ENCODE measurements at regions of chrX and their contacts with region 1.

Region 1: GRCh38 chrX:112642349-112642748 is 37.4 kb downstream of the LHFPL1 start:
- H3K4me3 ChIP-seq: no peak overlapping the region
- H3K27ac ChIP-seq: no peak overlapping the region
- H3K4me1 ChIP-seq: no peaks in the 10 kb centered on the region
- CTCF ChIP-seq: peak; percentile 59

Region 2: DNA sequence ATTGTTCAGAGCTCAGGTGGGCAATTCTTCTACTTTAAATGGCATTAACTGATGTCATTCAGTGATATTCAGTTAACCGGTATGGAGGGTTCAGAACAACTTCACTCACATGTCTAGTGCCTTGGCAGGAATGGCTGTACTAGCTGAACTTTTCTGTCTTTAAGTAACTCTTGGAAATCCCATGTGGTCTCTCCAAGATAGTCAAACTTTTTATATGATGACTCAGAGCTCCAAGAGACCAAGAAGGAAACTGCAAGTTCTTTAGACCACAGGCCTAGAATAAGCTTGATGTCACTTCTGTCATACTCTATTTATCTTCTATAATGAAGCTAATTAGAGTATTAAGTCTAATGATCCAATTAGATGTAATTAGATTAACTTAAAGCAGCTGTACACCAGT is 12.5 kb after region 1 on chrX:
- CTCF ChIA-PET with region 1: interaction called, 11 read pairs
- POLR2A ChIA-PET with region 1: no interaction called
- H3K4me3 ChIP-seq: no peak overlapping the region
- H3K27ac ChIP-seq: no peak overlapping the region
- H3K4me1 ChIP-seq: no peaks in the 10 kb centered on the region
- CTCF ChIP-seq: no peak

Region 3: DNA sequence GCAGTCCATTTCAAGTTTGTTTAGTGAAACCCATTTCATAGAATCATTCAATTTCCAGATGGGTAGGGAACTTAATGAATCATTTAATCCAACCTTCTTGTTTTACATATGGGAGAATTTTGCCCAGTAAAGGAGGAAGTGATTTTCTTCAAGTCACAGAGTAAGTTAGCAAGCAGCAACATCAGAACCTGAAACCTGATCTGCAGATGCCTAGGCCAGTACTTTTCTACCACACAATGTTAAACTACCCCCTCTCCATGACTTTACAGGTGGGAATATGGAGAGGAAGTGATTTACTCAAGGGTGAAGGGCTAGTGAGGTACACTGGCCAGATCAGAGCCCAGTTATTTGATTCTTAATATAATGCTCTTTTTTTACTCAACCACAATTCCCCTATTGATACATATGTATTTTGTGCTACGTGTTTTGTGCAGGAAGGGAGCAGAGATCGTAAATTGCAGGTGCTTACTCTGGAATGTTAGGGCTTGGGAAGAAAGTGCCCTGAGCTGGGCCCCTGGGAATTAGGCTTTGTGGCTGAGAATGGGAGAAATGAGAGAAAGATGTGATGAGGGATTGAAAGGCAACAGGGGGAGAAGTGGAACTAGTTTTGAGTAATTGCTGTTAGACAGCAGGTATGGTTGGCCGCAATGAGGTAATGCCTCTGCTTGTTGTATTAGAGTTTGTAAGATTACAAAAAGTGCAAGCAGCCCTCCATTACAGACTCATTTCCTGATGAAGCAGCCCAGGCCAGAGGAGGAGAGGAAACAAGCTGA is 30.6 kb after region 1 on chrX:
- CTCF ChIA-PET with region 1: no interaction called
- POLR2A ChIA-PET with region 1: no interaction called
- H3K4me3 ChIP-seq: no peak overlapping the region
- H3K27ac ChIP-seq: no peak overlapping the region
- H3K4me1 ChIP-seq: no peaks in the 10 kb centered on the region
- CTCF ChIP-seq: no peak